Heart left ventricle (tissue), 16 donors: ENCODE measurements at regions of chr15 and their contacts with region 1.

Region 1: GRCh38 chr15:50424066-50424890 is at the start of gene USP8:
- DNase-seq: peak; percentile 96 to 98 (median 98)
- ATAC-seq: peak; percentile 99
- H3K4me3 ChIP-seq: peak within 1 kb of the TSS; percentile 61 to 95 (median 86)
- H3K27ac ChIP-seq: peak within 1 kb of the TSS; percentile 72 to 94 (median 88)
- H3K4me1 ChIP-seq: peaks cover 6 to 34% (median 15%) of the 10 kb centered on the region in 12 donors
- H3K27me3 ChIP-seq: no peaks in the 10 kb centered on the region
- CTCF ChIP-seq: no peak
- POLR2A ChIP-seq: peak in 1 of 2 donors; percentile 83
- total RNA-seq, gene USP8: 28.0 to 53.3 (median 42.1) TPM

Region 2: DNA sequence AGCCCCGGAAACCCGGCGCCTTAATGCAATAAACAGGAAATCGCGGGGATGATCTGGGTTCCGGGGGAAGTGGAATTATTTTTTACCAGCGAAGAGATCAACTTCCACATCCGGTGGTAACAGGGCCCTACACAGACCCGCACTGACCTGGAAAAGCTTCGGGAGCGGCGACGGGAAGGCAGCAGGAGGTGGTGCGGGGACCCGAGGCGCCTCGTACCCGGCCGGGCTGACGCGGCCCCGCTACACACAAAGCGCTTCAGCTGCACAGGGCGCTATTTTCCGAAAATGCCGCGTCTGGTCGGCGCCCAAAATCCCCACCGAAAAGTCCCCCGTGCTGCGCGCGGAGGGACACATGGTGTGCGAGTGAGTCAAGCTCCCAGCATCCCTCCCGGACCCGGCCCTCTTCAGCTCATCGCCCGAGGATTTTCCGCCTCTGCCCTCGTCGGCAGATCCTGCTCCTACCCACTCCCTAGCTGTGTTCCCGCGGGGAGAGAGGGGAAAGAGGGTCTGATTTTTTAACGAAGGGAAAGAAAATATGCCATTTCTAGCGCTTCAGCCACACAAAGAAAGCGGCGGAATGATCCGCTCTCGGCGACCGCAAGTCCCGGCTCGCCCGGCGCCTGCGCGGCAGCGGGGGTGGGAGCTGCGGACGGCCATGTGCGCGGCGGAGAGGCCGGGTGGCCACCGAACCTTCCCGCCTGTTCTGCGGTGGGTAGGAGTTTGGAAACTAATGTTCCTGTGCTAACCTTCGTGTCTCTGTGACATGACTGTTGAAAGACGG is 69.2 kb before region 1 on chr15 and contains the start of gene GABPB1:
- intact Hi-C with region 1: loop called in 5 of 10 experiments (anchors 1 to 5 kb)
- DNase-seq: peak; percentile 89 to 93 (median 91)
- ATAC-seq: peak; percentile 85 to 91 (median 88)
- H3K4me3 ChIP-seq: peak within 1 kb of the TSS; percentile 87 to 99 (median 94)
- H3K27ac ChIP-seq: peak within 1 kb of the TSS; percentile 97 to 100 (median 99)
- H3K4me1 ChIP-seq: peaks cover 7 to 60% (median 44%) of the 10 kb centered on the region in 12 donors
- H3K27me3 ChIP-seq: no peaks in the 10 kb centered on the region
- CTCF ChIP-seq: no peak
- POLR2A ChIP-seq: peak in 1 of 2 donors; percentile 33
- total RNA-seq, gene GABPB1: 7.0 to 14.2 (median 9.6) TPM

Region 3: DNA sequence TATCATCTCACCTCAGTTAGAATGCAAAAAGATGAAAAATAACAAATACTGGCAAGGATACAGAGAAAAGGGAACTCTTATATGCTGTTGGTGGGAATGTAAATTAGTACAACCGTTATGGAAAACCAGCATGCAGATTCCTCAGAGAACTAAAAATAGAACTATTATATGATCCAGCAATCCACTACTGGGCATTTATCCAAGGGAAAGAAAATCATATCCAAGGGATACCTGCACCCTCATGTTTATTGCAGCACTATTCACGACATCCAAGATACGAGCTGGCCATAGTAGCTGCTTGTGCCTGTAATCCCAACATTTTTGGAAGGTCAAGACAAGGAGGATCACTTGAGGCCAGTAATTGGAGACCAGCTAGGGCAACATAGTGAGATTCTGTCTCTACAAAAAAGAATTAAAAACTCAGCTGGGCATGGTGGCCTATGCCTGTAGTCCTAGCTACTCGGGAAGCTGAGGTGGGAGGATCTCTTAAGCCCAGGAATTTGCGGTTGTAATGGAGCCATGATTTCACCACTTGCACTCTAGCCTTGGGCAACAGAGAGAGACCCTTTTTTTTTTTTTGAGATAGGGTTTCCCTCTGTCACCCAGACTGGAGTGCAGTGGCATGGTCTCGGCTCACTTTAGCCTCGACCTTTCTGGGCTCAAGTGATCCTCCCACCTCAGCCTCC is 95.6 kb after region 1 on chr15:
- intact Hi-C with region 1: no loop called
- DNase-seq: no peak
- ATAC-seq: no peak
- H3K4me3 ChIP-seq: no peak overlapping the region
- H3K27ac ChIP-seq: no peak overlapping the region
- H3K4me1 ChIP-seq: no peaks in the 10 kb centered on the region
- H3K27me3 ChIP-seq: no peaks in the 10 kb centered on the region
- CTCF ChIP-seq: no peak
- POLR2A ChIP-seq: no peak